ENCODE measurements at regions of chr16 and their contacts with region 1.

Region 1: GRCh38 chr16:29784901-29785500 is 5.5 kb upstream of the KIF22 start:
- DNase-seq: peak; percentile 87
- ATAC-seq: peak; percentile 95

Region 2: DNA sequence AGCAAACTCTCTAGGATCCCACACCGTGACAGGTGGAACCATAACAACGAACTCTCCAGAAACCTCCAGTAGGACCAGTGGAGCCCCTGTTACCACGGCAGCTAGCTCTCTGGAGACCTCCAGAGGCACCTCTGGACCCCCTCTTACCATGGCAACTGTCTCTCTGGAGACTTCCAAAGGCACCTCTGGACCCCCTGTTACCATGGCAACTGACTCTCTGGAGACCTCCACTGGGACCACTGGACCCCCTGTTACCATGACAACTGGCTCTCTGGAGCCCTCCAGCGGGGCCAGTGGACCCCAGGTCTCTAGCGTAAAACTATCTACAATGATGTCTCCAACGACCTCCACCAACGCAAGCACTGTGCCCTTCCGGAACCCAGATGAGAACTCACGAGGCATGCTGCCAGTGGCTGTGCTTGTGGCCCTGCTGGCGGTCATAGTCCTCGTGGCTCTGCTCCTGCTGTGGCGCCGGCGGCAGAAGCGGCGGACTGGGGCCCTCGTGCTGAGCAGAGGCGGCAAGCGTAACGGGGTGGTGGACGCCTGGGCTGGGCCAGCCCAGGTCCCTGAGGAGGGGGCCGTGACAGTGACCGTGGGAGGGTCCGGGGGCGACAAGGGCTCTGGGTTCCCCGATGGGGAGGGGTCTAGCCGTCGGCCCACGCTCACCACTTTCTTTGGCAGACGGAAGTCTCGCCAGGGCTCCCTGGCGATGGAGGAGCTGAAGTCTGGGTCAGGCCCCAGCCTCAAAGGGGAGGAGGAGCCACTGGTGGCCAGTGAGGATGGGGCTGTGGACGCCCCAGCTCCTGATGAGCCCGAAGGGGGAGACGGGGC is 120.7 kb before region 1 on chr16:
- intact Hi-C with region 1: no loop called
- DNase-seq: peak; percentile 52
- ATAC-seq: no peak

Region 3: DNA sequence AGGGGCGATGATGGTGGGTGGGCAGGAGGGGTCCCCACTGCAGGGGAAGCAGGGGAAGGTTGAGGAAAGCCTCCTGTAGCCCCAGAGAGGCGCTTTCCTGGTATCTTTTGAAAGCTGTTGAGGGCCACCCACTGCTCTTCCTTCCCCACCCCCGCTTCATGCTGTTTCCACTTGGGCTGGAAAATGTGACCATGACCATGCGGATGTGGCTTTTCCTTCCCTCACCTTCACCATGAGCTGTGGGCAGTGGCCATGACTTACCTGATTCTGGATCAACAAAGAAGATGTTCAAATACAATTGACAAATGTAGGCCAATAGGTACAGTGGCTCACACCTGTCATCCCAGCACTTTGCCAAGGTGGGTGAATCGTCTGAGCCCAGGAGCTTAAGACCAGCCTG is 49.1 kb after region 1 on chr16:
- intact Hi-C with region 1: loop called (anchors 2 kb)
- DNase-seq: no peak
- ATAC-seq: no peak